ENCODE measurements at regions of chr22 and their contacts with region 1.

Region 1: DNA sequence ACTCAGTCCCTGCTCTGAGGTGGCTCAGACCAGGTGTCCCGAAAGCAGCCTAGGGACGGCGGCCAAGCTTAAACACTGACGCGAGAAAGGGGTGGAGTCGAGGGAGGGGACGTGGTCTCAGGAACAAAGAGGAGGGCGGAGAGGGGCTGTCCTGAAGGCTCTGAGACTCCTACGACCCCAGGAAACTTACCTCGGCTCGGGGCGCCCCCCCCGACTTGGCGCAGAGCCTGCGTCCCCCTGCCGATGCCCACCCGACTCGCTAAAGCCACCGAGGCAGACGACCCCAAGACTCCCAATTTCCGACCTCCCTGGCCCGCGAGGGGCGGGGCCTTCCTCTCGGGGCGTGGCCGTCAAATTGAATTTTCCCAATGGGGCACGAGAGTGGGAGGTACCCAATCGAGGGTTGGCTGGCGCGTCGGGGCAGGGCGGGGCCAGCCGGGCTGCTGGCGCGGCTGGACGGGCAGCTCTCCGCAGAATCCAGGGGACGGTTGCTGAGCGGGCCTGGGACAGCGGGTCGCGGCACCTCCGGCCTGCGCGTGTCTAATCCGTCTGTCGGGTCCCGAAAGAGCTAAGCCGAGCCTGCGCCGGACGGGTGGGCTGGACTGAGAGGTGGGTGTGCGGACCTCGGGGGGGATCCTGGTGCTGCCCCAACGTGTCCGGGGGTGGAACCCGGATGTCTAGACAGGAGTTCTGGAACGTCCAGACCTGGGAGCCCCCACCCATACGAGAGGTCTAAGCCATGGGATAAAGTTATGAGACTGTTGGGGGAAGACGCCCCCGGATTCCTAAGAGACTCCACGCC is at the start of gene SMTN:
- DNase-seq: peak; percentile 60
- H3K4me3 ChIP-seq: peak within 1 kb of the TSS; percentile 91
- H3K27ac ChIP-seq: peak within 1 kb of the TSS; percentile 85
- H3K27me3 ChIP-seq: no peaks in the 10 kb centered on the region
- CTCF ChIP-seq: 0 out of 2 replicates have a peak, but pooled peaks have one; percentile 7
- polyA plus RNA-seq, gene SMTN: 13.2 and 14.1 TPM in 2 replicates

Region 2: GRCh38 chr22:30634471-30635233 is 446.4 kb before region 1 on chr22:
- CTCF ChIA-PET with region 1: no interaction called
- POLR2A ChIA-PET with region 1: no interaction called
- DNase-seq: peak; percentile 74
- H3K4me3 ChIP-seq: peak overlapping the region; percentile 39
- H3K27ac ChIP-seq: peak overlapping the region; percentile 79
- H3K27me3 ChIP-seq: no peaks in the 10 kb centered on the region
- CTCF ChIP-seq: peak; percentile 96

Region 3: DNA sequence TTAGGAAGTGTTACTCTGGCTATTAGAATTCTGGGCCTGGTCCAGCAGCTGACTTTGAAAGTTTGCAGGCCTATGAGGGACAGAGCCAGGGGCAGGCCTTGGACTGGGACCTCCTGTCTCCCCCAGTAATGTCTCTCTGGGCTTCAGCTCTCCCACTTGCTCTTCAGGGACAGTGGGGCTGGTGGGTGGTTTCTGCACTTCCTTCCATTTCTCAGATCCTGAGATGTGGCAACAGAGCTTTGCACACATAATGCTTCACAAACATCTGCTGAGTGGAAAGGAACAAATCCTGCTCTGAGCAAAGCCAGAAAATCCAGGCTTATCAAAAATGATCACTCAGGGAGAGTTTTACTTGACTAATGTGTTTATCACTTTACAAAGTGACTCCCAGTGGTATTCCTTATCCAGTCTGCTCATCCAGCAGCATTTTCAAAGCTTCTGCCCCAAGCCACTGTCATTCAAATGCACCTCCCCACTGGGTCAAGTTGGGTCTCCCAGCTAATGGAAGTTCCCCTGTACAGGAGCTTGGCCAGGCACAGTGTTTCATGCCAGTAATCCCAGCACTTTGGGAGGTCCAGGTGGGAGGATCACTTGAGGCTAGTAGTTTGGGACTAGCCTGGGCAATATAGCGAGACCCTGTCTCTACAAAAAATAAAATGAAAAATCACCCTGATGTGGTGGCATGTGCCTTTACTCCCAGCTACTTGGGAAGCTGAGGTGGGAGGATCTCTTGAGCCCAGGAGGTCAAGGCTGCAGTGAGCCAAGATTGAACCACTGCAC is 399.9 kb before region 1 on chr22:
- CTCF ChIA-PET with region 1: no interaction called
- POLR2A ChIA-PET with region 1: no interaction called
- DNase-seq: no peak
- H3K4me3 ChIP-seq: no peak overlapping the region
- H3K27ac ChIP-seq: no peak overlapping the region
- H3K27me3 ChIP-seq: peaks cover 5% of the 10 kb centered on the region
- CTCF ChIP-seq: no peak

Region 4: DNA sequence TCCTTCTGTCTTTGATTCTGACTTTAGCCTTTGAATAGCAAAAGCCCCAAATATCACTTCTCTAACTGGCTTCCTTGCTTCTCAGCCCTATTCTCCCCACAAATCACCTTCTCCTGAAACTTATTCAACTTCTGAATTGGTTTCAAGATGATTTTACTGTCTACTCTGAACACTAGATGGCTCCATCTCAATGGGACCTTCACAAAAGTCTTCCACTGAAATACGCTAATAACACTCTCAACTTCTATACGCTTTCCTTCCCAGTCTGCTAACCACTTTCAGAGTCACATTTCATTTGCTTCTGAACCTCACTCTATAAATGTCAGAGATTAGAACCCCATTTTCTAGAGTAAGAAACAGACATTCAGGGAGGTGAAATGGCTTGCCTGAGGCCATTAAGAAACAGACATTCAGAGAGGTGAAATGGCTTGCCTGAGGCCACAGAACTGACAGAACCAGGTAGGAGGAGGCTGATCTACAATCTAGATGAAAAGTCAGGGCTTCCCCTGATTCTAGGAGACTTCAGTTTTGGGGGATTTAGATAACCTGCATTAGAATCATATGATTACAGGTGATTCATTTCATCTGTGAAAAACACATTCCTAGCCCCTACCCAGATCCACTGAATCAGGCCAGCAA is 133.1 kb before region 1 on chr22:
- CTCF ChIA-PET with region 1: interaction called, 85 read pairs
- POLR2A ChIA-PET with region 1: interaction called, 5 read pairs
- DNase-seq: peak; percentile 36
- H3K4me3 ChIP-seq: no peak overlapping the region
- H3K27ac ChIP-seq: no peak overlapping the region
- H3K27me3 ChIP-seq: no peaks in the 10 kb centered on the region
- CTCF ChIP-seq: peak; percentile 66

Region 5: DNA sequence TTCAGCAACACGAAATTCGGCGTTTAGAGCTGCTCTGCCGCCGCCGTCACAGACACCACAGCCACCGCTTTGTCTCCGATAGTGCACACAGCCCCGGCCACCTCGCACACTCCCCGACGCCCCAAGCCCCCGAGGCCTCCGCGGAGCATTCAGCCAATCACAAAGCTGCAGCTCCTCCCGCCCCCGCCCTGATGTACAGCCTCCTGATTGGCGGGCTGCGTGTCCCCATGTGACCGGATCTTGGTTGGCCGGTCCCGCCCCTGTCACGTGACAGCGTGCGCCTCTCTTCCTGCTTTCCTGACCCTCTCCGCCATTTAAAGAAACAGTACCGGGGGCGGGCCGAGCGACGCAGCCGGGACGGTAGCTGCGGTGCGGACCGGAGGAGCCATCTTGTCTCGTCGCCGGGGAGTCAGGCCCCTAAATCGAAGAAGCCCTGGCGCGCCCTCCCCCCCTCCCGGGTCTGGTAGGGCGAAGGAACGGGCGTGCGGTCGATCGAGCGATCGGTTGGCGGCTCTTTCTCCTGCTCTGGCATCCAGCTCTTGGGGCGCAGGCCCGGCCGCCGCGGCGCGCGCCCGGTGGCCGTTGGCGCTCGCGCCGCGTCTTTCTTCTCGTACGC is 112.0 kb before region 1 on chr22 and contains the start of gene TUG1:
- CTCF ChIA-PET with region 1: interaction called, 61 read pairs
- POLR2A ChIA-PET with region 1: interaction called, 94 read pairs
- DNase-seq: peak; percentile 95
- H3K4me3 ChIP-seq: peak within 1 kb of the TSS; percentile 73
- H3K27ac ChIP-seq: peak within 1 kb of the TSS; percentile 93
- H3K27me3 ChIP-seq: no peaks in the 10 kb centered on the region
- CTCF ChIP-seq: no peak
- polyA plus RNA-seq, gene TUG1: 129 and 152 TPM in 2 replicates

Region 6: GRCh38 chr22:30979932-30980331 is 101.1 kb before region 1 on chr22:
- CTCF ChIA-PET with region 1: interaction called, 10 read pairs
- POLR2A ChIA-PET with region 1: interaction called, 7 read pairs
- DNase-seq: no peak
- H3K4me3 ChIP-seq: no peak overlapping the region
- H3K27ac ChIP-seq: no peak overlapping the region
- H3K27me3 ChIP-seq: no peaks in the 10 kb centered on the region
- CTCF ChIP-seq: no peak

Region 7: DNA sequence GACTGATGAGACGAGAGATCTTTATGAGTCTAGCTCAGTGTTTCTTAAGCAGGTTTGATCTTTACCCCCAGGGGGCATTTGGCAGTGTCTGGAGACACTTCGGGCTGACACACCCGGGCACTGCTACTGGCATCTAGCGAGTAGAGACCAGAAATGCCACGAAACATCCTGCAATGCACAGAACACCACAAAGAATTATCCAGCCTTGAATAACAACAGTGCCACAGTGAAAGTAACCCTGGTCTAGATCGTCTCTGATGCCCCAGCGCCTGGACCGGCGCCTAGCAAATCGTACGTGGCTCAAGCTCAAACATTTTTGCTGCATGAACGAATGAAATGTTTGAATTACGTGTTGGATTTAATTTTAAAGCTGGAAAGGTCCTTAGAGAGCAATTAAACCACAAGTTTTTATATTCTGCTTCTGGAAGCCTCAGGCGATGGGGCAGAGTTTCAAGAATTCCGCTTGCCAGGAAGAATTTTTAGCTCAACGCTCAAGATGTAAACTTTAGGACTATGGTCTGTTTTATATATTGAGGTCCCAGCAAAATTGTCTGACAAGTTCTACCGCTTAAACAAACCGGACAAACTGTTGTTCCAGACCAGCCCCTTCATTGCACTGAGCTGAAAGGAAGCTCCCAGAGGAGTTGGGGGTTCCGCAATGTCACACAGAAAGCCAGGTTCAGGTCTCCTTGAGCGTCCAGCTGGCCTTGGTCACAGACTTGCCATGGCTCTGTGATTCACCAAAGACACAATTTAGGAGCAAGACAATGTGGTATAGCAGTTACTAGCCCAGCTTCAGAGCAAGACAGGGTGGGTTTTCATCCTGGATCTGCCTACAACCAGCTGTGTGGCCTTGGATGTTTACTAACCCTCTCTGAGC is 44.1 kb before region 1 on chr22:
- CTCF ChIA-PET with region 1: interaction called, 10 read pairs
- POLR2A ChIA-PET with region 1: interaction called, 12 read pairs
- DNase-seq: no peak
- H3K4me3 ChIP-seq: peak overlapping the region; percentile 33
- H3K27ac ChIP-seq: peak overlapping the region; percentile 32
- H3K27me3 ChIP-seq: no peaks in the 10 kb centered on the region
- CTCF ChIP-seq: peak; percentile 24; the same call in 1 of the 2 replicates

Region 8: GRCh38 chr22:31055635-31056159 is 25.4 kb before region 1 on chr22:
- CTCF ChIA-PET with region 1: interaction called, 10 read pairs
- POLR2A ChIA-PET with region 1: interaction called, 12 read pairs
- DNase-seq: peak; percentile 98
- H3K4me3 ChIP-seq: no peak overlapping the region
- H3K27ac ChIP-seq: peak overlapping the region; percentile 86
- H3K27me3 ChIP-seq: no peaks in the 10 kb centered on the region
- CTCF ChIP-seq: no peak